SK-N-SH (cell line): ENCODE measurements at regions of chr5 and their contacts with region 1.

Region 1: DNA sequence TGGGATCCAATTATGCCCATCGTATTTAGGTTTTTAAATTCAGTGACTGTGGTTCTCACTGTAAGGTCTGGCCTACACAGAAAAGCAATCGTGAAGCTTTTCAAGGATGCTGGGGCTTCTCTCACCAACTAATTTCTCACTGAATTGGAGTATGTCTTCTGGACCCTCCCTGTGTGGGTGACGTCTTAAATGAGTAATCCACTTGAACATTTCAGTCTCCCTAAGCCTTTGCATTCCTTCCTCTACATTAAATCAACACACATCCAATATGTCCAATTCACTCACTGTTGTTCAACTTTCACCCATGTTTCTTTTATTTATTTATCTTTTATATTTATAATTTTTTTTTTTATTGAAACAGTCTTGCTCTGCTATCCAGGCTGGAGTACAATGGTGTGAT is 12.5 kb upstream of the BTF3 start:
- DNase-seq: no peak
- H3K4me3 ChIP-seq: no peak overlapping the region
- H3K27ac ChIP-seq: no peak overlapping the region
- H3K4me1 ChIP-seq: no peaks in the 10 kb centered on the region
- H3K27me3 ChIP-seq: no peaks in the 10 kb centered on the region
- CTCF ChIP-seq: no peak
- EP300 ChIP-seq: no peak
- RAD21 ChIP-seq: no peak

Region 2: GRCh38 chr5:73498057-73499008 is 12.6 kb after region 1 on chr5 and contains the start of gene BTF3:
- CTCF ChIA-PET with region 1: interaction called, 14 read pairs
- POLR2A ChIA-PET with region 1: no interaction called
- DNase-seq: peak; percentile 91
- H3K4me3 ChIP-seq: peak within 1 kb of the TSS; percentile 88 to 98
- H3K27ac ChIP-seq: peak within 1 kb of the TSS; percentile 95 to 99
- H3K4me1 ChIP-seq: peaks cover 11 to 16% of the 10 kb centered on the region in 2 experiments; a peak in 3 of 4 replicates
- H3K27me3 ChIP-seq: no peaks in the 10 kb centered on the region
- CTCF ChIP-seq: no peak
- EP300 ChIP-seq: no peak
- RAD21 ChIP-seq: no peak
- polyA plus RNA-seq, gene BTF3: 458 and 492 TPM in 2 replicates

Region 3: GRCh38 chr5:73519531-73520283 is 34.0 kb after region 1 on chr5:
- CTCF ChIA-PET with region 1: no interaction called
- POLR2A ChIA-PET with region 1: no interaction called
- DNase-seq: peak; percentile 84
- H3K4me3 ChIP-seq: no peak overlapping the region
- H3K27ac ChIP-seq: no peak overlapping the region
- H3K4me1 ChIP-seq: no peaks in the 10 kb centered on the region; a peak in 1 of 4 replicates
- H3K27me3 ChIP-seq: no peaks in the 10 kb centered on the region
- CTCF ChIP-seq: peak; percentile 81
- EP300 ChIP-seq: no peak
- RAD21 ChIP-seq: peak; percentile 87